ENCODE measurements at regions of chr7 and their contacts with region 1.

Region 1: GRCh38 chr7:134646425-134647305 is at the start of gene BPGM:
- DNase-seq: peak; percentile 98 to 100 (median 99)
- H3K4me3 ChIP-seq: peak within 1 kb of the TSS; percentile 66 to 68
- H3K4me3 Mint-ChIP-seq: no peak within 1 kb of the TSS
- H3K27ac ChIP-seq: peak within 1 kb of the TSS; percentile 84
- H3K27ac Mint-ChIP-seq: no peak within 1 kb of the TSS
- H3K4me1 ChIP-seq: peaks cover 32% of the 10 kb centered on the region
- H3K4me1 Mint-ChIP-seq: peaks cover 17 to 22% (median 20%) of the 10 kb centered on the region in 4 donors
- H3K27me3 ChIP-seq: no peaks in the 10 kb centered on the region
- H3K27me3 Mint-ChIP-seq: no peaks in the 10 kb centered on the region
- total RNA-seq, gene BPGM: 13.7 to 14.7 TPM

Region 2: GRCh38 chr7:134632937-134633540 is 13.6 kb before region 1 on chr7:
- CTCF ChIA-PET with region 1: interaction called, 51 read pairs
- POLR2A ChIA-PET with region 1: interaction called, 45 read pairs
- intact Hi-C with region 1: loop called (anchors 1 kb)
- DNase-seq: peak; percentile 57 to 65 (median 62)
- H3K4me3 ChIP-seq: no peak overlapping the region
- H3K4me3 Mint-ChIP-seq: no peak overlapping the region
- H3K27ac ChIP-seq: no peak overlapping the region
- H3K27ac Mint-ChIP-seq: peak overlapping the region in 1 of 7 donors; percentile 19
- H3K4me1 ChIP-seq: peaks cover 17% of the 10 kb centered on the region
- H3K4me1 Mint-ChIP-seq: peaks cover 13 to 18% (median 16%) of the 10 kb centered on the region in 4 donors
- H3K27me3 ChIP-seq: no peaks in the 10 kb centered on the region
- H3K27me3 Mint-ChIP-seq: peaks cover 9 to 12% of the 10 kb centered on the region in 2 donors

Region 3: GRCh38 chr7:134701272-134701671 is 54.6 kb after region 1 on chr7:
- CTCF ChIA-PET with region 1: interaction called, 43 read pairs
- POLR2A ChIA-PET with region 1: interaction called, 8 read pairs
- intact Hi-C with region 1: no loop called
- DNase-seq: peak in 4 of 5 donors; percentile 18 to 21 (median 20)
- H3K4me3 ChIP-seq: no peak overlapping the region
- H3K4me3 Mint-ChIP-seq: no peak overlapping the region
- H3K27ac ChIP-seq: no peak overlapping the region
- H3K27ac Mint-ChIP-seq: no peak overlapping the region
- H3K4me1 ChIP-seq: no peaks in the 10 kb centered on the region
- H3K4me1 Mint-ChIP-seq: no peaks in the 10 kb centered on the region
- H3K27me3 ChIP-seq: no peaks in the 10 kb centered on the region
- H3K27me3 Mint-ChIP-seq: no peaks in the 10 kb centered on the region

Region 4: GRCh38 chr7:134865001-134865845 is 218.6 kb after region 1 on chr7:
- CTCF ChIA-PET with region 1: no interaction called
- POLR2A ChIA-PET with region 1: interaction called, 3 read pairs
- intact Hi-C with region 1: loop called (anchors 10 kb)
- DNase-seq: peak; percentile 39 to 60 (median 48)
- H3K4me3 ChIP-seq: peak overlapping the region in 1 of 2 donors; percentile 32
- H3K4me3 Mint-ChIP-seq: peak overlapping the region; percentile 73 to 88 (median 80)
- H3K27ac ChIP-seq: no peak overlapping the region
- H3K27ac Mint-ChIP-seq: peak overlapping the region; percentile 58 to 91 (median 90)
- H3K4me1 ChIP-seq: peaks cover 12% of the 10 kb centered on the region
- H3K4me1 Mint-ChIP-seq: peaks cover 16 to 30% (median 20%) of the 10 kb centered on the region in 4 donors
- H3K27me3 ChIP-seq: no peaks in the 10 kb centered on the region
- H3K27me3 Mint-ChIP-seq: peaks cover 0 to 4% of the 10 kb centered on the region in 2 donors

Region 5: GRCh38 chr7:135170274-135170997 is 523.8 kb after region 1 on chr7 and contains the start of gene CYREN:
- CTCF ChIA-PET with region 1: interaction called, 8 read pairs
- POLR2A ChIA-PET with region 1: interaction called, 19 read pairs
- intact Hi-C with region 1: loop called (anchors 1 kb)
- DNase-seq: peak; percentile 79 to 88 (median 84)
- H3K4me3 ChIP-seq: peak within 1 kb of the TSS; percentile 19 to 79
- H3K4me3 Mint-ChIP-seq: peak within 1 kb of the TSS; percentile 89 to 95 (median 90)
- H3K27ac ChIP-seq: peak within 1 kb of the TSS; percentile 93
- H3K27ac Mint-ChIP-seq: peak within 1 kb of the TSS; percentile 94 to 97 (median 97)
- H3K4me1 ChIP-seq: peaks cover 43% of the 10 kb centered on the region
- H3K4me1 Mint-ChIP-seq: peaks cover 35 to 57% (median 45%) of the 10 kb centered on the region in 4 donors
- H3K27me3 ChIP-seq: no peaks in the 10 kb centered on the region
- H3K27me3 Mint-ChIP-seq: no peaks in the 10 kb centered on the region
- total RNA-seq, gene CYREN: 45.3 to 46.5 TPM

Region 6: GRCh38 chr7:135558337-135558767 is 911.7 kb after region 1 on chr7:
- CTCF ChIA-PET with region 1: no interaction called
- POLR2A ChIA-PET with region 1: no interaction called
- intact Hi-C with region 1: loop called (anchors 1 kb)
- DNase-seq: peak; percentile 68 to 80 (median 70)
- H3K4me3 ChIP-seq: peak overlapping the region; percentile 92 to 96
- H3K4me3 Mint-ChIP-seq: no peak overlapping the region
- H3K27ac ChIP-seq: peak overlapping the region; percentile 92
- H3K27ac Mint-ChIP-seq: no peak overlapping the region
- H3K4me1 ChIP-seq: peaks cover 24% of the 10 kb centered on the region
- H3K4me1 Mint-ChIP-seq: peaks cover 17 to 23% (median 19%) of the 10 kb centered on the region in 4 donors
- H3K27me3 ChIP-seq: no peaks in the 10 kb centered on the region
- H3K27me3 Mint-ChIP-seq: peaks cover 0 to 2% of the 10 kb centered on the region in 2 donors

Measured in CD4-positive, alpha-beta memory T cell (primary cell).